ENCODE measurements at regions of chr12 and their contacts with region 1.

Region 1: DNA sequence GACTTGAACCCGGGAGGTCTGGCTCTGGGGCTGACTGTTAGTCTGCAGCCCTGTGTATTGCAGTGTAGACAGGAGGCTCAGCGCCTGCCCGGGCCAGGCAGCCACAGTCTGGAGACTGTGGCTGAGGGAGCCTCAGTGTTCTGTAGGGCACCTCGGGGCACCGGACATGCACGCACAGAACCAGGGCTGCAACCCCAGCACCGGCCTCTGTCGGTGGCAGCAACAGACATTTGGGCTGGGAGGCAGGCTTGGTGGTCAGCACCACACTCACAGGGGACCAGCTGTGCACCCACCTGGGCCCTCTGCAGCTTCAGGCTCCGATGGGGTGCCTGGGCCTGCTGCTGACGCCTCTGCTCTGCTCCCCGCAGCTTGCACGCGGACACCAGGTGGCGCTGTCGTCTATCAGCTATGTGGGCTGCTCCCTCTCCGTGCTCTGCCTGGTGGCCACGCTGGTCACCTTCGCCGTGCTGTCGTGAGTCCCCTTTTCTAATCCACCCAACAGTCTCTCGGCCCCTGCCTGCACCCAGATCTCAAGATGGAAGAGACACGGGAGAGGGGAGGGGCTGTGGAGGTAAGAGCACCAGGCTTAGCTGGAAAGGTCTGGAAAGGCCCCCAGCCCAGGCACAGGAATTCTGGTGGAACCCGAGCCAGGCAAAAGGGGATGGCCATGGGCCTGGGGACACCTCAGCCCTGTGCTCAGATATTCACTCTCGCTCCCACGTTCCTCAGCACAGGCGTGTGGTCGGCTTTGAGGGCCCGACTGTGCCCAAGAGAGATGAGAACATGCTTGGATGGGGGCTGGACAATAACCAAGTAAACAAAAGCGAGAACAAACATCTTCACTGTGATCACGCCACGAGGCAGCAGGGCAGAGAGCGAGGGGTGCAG is 151.0 kb downstream of the ADGRD1 start:
- DNase-seq: peak; percentile 87
- CTCF ChIP-seq: peak; percentile 93

Region 2: GRCh38 chr12:130970165-130970907 is 134.4 kb before region 1 on chr12:
- CTCF ChIA-PET with region 1: no interaction called
- POLR2A ChIA-PET with region 1: no interaction called
- DNase-seq: no peak
- CTCF ChIP-seq: no peak

Region 3: GRCh38 chr12:131012279-131013069 is 92.2 kb before region 1 on chr12:
- CTCF ChIA-PET with region 1: no interaction called
- POLR2A ChIA-PET with region 1: no interaction called
- DNase-seq: no peak
- CTCF ChIP-seq: no peak

Region 4: DNA sequence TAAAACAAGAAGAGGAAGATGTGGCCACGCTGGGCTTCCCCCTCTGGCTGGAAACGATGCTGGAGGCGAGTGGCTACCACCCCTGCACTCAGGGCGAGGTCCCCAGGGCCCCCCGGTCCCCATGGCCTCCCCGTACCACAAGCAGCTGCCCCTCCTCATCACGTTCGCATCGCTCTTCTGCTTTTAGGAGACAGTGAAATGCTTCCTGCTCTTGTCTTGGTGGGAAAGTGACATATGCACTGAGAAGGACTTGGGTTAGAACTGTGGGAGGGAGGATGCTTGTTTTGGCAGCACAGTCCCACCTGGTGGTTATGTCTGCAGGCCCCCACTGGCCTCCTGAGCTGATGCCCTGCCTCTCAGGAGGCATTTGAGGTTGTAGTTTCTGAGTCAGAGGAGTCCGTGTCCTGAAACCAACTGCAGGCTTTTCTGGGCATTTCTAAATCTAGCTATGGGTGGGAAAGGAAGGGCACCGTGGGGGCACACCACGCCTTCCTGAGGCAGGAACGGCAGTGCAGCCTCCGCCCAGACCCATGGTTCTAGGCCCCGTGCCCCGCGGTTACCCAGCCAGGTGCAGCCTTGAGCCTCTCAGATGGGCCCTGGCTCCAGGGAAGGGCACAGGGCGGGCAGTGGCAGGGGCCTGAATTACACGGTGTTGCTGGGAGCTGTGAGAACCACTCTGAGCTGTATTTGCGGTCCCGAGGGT is 11.7 kb before region 1 on chr12:
- CTCF ChIA-PET with region 1: interaction called, 42 read pairs
- POLR2A ChIA-PET with region 1: no interaction called
- DNase-seq: peak; percentile 78
- CTCF ChIP-seq: peak; percentile 16

Region 5: DNA sequence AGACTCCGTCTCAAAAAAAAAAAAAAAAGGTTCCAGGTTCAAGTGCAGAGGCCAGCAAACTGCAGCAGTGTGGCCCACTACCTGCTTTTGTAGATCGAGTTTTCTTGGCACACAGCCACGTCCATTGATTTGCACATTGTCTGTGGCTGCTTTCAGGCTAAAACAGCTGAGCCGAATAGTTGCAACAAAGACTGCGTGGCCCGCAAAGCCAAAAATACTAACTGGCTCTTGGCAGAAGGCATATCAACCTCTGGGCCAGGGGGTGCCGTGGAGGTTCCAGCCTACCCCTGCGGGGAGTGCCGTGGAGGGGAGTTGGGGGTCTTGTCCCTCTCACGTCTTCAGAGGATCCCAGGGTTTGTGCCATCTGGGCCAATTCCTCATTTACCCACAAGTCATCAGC is 19.1 kb after region 1 on chr12:
- CTCF ChIA-PET with region 1: interaction called, 88 read pairs
- POLR2A ChIA-PET with region 1: no interaction called
- DNase-seq: no peak
- CTCF ChIP-seq: no peak

Region 6: DNA sequence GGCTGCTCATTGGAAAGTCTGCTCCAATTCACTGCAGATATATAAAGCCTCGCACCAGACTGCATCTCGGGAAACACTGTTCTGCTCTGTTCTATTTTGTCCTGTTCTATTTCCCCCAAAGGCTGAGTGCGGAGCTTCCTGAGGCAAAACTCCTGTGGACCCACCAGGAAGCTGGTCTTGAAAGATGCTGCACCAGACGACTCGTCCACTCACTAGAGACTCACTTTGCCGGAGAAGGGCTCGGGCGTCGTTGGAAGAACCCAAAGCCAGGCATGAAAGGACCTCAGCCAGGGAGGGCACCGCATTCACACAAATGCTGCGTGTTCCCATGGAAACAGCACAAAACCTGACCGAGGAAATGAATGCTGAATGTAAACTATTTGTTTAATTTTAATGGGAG is 275.0 kb after region 1 on chr12:
- CTCF ChIA-PET with region 1: no interaction called
- POLR2A ChIA-PET with region 1: no interaction called
- DNase-seq: no peak
- CTCF ChIP-seq: no peak

Region 7: GRCh38 chr12:131454418-131455217 is 349.9 kb after region 1 on chr12:
- CTCF ChIA-PET with region 1: interaction called, 43 read pairs
- POLR2A ChIA-PET with region 1: no interaction called
- DNase-seq: peak; percentile 69
- CTCF ChIP-seq: peak; percentile 79

Region 8: GRCh38 chr12:131830335-131830913 is 725.7 kb after region 1 on chr12:
- CTCF ChIA-PET with region 1: interaction called, 47 read pairs
- POLR2A ChIA-PET with region 1: no interaction called
- DNase-seq: peak; percentile 70
- CTCF ChIP-seq: peak; percentile 76

Measured in GM10248 (cell line).